ENCODE measurements at regions of chr11 and their contacts with region 1.

Region 1: GRCh38 chr11:121494355-121495099 is 41.8 kb upstream of the SORL1-AS1 start:
- DNase-seq: peak; percentile 69
- ATAC-seq: peak; percentile 87
- H3K4me3 ChIP-seq: peak overlapping the region; percentile 24
- H3K27ac ChIP-seq: peak overlapping the region; percentile 66
- H3K4me1 ChIP-seq: peaks cover 32% of the 10 kb centered on the region
- H3K27me3 ChIP-seq: no peaks in the 10 kb centered on the region
- CTCF ChIP-seq: no peak
- EP300 ChIP-seq: no peak
- POLR2A ChIP-seq: no peak
- RAD21 ChIP-seq: no peak

Region 2: DNA sequence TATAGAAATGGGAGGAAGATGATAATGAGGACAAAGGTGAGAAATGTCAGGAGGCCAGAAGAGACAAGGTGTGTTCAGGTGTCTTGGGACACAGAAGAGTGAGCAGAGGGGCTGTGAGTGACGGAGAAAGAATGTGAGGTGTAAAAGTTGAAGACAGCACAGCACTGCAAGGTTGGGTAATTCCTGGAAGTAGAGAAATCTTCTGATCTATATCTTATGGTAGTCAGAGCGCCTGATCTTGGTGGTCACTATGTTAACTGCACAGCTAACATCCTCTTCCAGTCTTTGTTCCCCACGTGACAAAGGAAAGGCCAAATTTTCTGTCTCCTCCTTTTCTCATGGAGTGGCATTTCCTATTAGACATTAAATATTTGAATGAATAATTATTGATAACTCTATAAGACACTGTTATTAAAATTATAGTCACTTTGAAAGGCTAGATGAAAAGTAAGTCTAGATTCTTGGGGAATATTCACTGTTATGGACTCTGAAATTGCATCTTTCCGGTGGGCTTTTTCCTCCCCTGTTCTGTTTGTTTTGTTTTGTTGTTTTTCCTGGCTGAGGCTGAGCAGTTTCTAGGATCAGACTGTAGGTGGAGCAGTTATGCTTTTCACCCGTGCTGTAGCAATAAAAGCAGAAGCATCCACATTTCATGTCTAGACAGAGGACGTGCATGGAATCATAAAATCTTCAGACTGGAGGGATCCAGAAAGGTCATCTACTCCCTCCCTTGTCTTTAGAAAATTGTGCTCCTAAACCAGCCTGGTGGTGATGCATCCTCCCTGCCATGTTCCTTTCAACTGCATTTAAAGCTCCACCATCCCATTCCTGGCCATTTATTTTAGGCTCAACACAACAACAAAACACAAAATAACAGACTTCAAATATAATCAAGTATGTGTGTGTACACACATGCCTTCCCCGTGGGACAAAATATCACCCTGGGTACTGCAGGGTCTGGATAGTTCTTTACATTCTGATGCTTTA is 175.4 kb before region 1 on chr11:
- CTCF ChIA-PET with region 1: interaction called, 10 read pairs
- POLR2A ChIA-PET with region 1: no interaction called
- RAD21 ChIA-PET with region 1: interaction called, 3 read pairs
- SMC1A ChIA-PET with region 1: interaction called, 5 read pairs
- in situ Hi-C with region 1: no loop called
- intact Hi-C with region 1: no loop called
- DNase-seq: no peak
- ATAC-seq: peak; percentile 84
- H3K4me3 ChIP-seq: no peak overlapping the region
- H3K27ac ChIP-seq: no peak overlapping the region
- H3K4me1 ChIP-seq: peaks cover 4% of the 10 kb centered on the region; the same call in 1 of the 2 replicates
- H3K27me3 ChIP-seq: no peaks in the 10 kb centered on the region
- CTCF ChIP-seq: peak; percentile 75 to 88 (median 86)
- EP300 ChIP-seq: no peak
- POLR2A ChIP-seq: no peak
- RAD21 ChIP-seq: peak; percentile 93

Region 3: GRCh38 chr11:121328967-121329679 is 165.4 kb before region 1 on chr11:
- CTCF ChIA-PET with region 1: no interaction called
- POLR2A ChIA-PET with region 1: no interaction called
- RAD21 ChIA-PET with region 1: no interaction called
- SMC1A ChIA-PET with region 1: interaction called, 12 read pairs
- in situ Hi-C with region 1: no loop called
- intact Hi-C with region 1: no loop called
- DNase-seq: no peak
- ATAC-seq: peak; percentile 68
- H3K4me3 ChIP-seq: no peak overlapping the region
- H3K27ac ChIP-seq: peak overlapping the region; percentile 13; the same call in 1 of the 2 replicates
- H3K4me1 ChIP-seq: peaks cover 18% of the 10 kb centered on the region
- H3K27me3 ChIP-seq: no peaks in the 10 kb centered on the region
- CTCF ChIP-seq: no peak
- EP300 ChIP-seq: no peak
- POLR2A ChIP-seq: no peak
- RAD21 ChIP-seq: no peak

Region 4: DNA sequence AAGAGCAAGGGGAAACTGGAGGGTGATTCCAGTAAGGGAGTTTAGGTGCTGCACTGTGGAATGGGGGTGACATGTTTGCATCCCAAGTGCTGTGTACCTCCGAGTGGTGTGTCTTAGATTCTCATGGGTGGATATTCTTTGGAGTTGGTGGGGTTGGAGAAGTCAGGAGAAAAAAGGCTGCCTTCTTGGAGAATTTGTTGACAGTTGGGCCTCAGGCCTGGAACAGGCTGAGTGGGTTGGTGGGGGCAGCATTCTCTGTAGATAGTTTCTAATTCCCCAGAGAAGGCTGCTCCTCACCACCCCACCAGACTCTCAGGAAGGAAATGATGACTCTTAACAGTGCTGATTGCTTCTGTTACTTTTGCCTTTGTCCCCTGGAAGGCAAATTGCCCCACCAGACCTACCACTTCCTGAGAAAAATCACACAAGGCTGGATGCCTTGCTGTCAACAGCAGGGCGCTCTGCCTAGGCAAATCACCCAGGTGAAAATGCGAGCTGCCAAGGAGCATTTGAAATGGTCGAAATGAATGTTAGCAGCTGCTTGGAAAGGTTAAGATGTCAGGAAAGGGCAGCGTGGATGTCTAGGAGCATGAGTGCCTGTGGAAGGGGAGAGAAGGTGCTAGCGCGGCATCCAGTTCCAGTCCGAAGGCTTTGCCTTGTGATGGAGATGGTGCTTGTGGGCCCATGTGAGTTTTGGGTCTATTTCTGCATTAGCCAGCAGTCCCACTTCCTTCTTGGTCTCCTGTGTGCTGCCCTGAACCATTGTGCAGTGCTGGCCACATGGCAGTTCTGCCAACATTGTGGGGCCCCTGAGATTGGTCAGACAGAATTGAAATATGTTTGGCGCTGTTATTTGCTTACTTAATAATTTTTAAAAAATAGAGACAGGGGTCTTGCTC is 12.0 kb before region 1 on chr11:
- CTCF ChIA-PET with region 1: interaction called, 11 read pairs
- POLR2A ChIA-PET with region 1: interaction called, 7 read pairs
- RAD21 ChIA-PET with region 1: interaction called, 13 read pairs
- SMC1A ChIA-PET with region 1: interaction called, 34 read pairs
- in situ Hi-C with region 1: no loop called
- intact Hi-C with region 1: no loop called
- DNase-seq: peak; percentile 93
- ATAC-seq: peak; percentile 93
- H3K4me3 ChIP-seq: peak overlapping the region; percentile 36
- H3K27ac ChIP-seq: peak overlapping the region; percentile 77
- H3K4me1 ChIP-seq: peaks cover 37% of the 10 kb centered on the region
- H3K27me3 ChIP-seq: no peaks in the 10 kb centered on the region
- CTCF ChIP-seq: no peak
- EP300 ChIP-seq: peak in 1 of 2 experiments; percentile 40; a peak in 1 of 4 replicates
- POLR2A ChIP-seq: no peak
- RAD21 ChIP-seq: no peak

Region 5: DNA sequence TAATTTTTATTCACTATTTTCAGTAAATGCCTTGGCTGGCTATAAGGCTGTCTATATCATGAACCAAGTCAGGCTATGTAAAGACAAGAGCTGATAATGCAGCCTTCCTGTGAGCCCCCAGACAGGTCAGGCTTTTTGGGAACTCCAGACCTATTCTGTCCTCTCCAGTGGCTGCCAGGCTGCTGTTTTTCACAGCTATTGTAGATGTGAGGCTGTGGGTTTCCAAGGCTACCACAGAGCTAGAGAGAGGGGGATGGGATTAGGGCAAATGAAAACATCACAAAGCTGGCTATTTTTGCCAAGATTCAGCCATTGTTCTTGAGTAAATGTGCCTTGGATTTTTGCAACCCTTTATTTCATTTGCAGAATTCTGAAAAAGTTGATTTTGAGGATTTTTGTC is 13.9 kb after region 1 on chr11:
- CTCF ChIA-PET with region 1: interaction called, 9 read pairs
- POLR2A ChIA-PET with region 1: no interaction called
- RAD21 ChIA-PET with region 1: interaction called, 3 read pairs
- SMC1A ChIA-PET with region 1: interaction called, 12 read pairs
- in situ Hi-C with region 1: no loop called
- intact Hi-C with region 1: no loop called
- DNase-seq: no peak
- ATAC-seq: no peak; the same call in 2 of the 3 replicates
- H3K4me3 ChIP-seq: no peak overlapping the region
- H3K27ac ChIP-seq: no peak overlapping the region
- H3K4me1 ChIP-seq: no peaks in the 10 kb centered on the region
- H3K27me3 ChIP-seq: no peaks in the 10 kb centered on the region
- CTCF ChIP-seq: no peak
- EP300 ChIP-seq: no peak
- POLR2A ChIP-seq: no peak
- RAD21 ChIP-seq: no peak

Region 6: GRCh38 chr11:121547574-121547973 is 53.0 kb after region 1 on chr11:
- CTCF ChIA-PET with region 1: no interaction called
- POLR2A ChIA-PET with region 1: no interaction called
- RAD21 ChIA-PET with region 1: no interaction called
- SMC1A ChIA-PET with region 1: no interaction called
- in situ Hi-C with region 1: no loop called
- intact Hi-C with region 1: no loop called
- DNase-seq: no peak
- ATAC-seq: no peak
- H3K4me3 ChIP-seq: no peak overlapping the region
- H3K27ac ChIP-seq: no peak overlapping the region
- H3K4me1 ChIP-seq: peaks cover 32% of the 10 kb centered on the region
- H3K27me3 ChIP-seq: no peaks in the 10 kb centered on the region
- CTCF ChIP-seq: no peak
- EP300 ChIP-seq: no peak
- POLR2A ChIP-seq: no peak
- RAD21 ChIP-seq: no peak

Region 7: DNA sequence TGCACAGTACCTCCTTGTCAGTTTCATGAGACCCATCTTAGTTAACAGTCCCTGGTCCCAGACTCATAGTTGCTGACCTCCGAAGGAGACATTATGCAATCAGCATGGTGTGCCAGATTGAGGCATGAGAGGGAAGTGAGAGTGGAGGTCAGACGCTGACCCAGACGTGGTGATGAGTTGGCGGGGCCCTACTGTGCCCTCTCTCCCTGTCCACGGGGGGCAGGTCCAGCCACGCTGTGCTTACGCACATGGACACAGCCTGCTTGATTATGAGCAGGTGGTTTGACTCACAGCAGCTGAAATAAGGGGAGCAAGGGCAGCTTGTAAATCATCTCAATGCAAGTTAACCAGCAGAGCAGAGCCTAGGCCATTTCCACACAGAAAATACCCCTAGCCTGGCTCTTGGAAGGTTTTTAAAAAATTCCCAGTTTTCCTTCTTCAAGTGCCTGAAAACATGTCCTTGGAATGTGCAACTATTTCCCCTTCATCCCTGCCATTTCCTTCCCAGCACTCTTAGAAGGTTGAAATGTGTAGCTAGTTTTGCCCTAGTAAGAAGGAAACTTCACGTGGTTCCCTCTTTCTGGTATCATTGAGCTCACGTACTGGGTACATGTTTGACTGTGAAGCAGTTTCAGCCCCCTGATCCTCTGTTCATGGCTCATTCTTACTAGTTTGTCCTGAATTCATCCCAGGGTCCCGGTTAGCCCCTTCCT is 80.9 kb after region 1 on chr11:
- CTCF ChIA-PET with region 1: interaction called, 3 read pairs
- POLR2A ChIA-PET with region 1: no interaction called
- RAD21 ChIA-PET with region 1: interaction called, 6 read pairs
- SMC1A ChIA-PET with region 1: interaction called, 23 read pairs
- in situ Hi-C with region 1: no loop called
- intact Hi-C with region 1: no loop called
- DNase-seq: peak; percentile 74
- ATAC-seq: peak; percentile 93
- H3K4me3 ChIP-seq: no peak overlapping the region
- H3K27ac ChIP-seq: peak overlapping the region; percentile 75
- H3K4me1 ChIP-seq: peaks cover 56% of the 10 kb centered on the region
- H3K27me3 ChIP-seq: no peaks in the 10 kb centered on the region
- CTCF ChIP-seq: no peak
- EP300 ChIP-seq: peak; percentile 86 to 91
- POLR2A ChIP-seq: no peak; the same call in 1 of the 2 replicates
- RAD21 ChIP-seq: no peak

Measured in GM12878 (cell line).